PC-9 (cell line): ENCODE measurements at regions of chr9 and their contacts with region 1.

Region 1: DNA sequence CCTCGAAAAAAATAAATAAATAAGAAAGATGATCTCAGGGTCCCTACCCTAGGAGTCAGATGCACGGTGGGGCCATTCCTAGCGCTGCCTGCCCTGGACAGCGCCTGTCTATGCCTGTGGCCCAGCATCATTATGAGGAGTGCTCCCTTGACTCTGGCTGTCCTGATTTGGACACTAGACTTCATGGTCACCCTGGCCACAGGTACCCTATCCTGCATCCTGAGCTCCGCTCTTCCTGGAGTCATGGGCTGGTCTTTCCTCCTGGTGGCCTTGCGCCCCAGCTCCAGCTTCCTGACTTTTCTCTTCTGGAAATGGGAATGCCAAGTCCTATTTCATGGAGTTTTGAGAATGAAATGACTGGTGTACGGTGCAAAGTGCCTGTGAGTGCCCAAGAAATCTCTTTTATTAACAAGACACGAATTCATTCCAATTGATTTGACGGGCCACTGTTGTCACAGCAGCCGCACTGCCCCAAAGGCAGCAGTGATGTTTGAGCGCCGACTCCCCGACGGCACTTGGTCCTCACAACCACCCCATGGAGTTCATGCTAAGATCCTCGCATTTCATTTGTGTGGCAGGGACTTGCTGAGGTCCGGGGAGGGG is 564 bp upstream of the AIF1L start:
- DNase-seq: no peak
- H3K4me3 ChIP-seq: peak overlapping the region; percentile 92; the same call in 1 of the 2 replicates
- H3K27ac ChIP-seq: no peak overlapping the region
- H3K4me1 ChIP-seq: peaks cover 28% of the 10 kb centered on the region
- H3K27me3 ChIP-seq: no peaks in the 10 kb centered on the region
- CTCF ChIP-seq: no peak

Region 2: DNA sequence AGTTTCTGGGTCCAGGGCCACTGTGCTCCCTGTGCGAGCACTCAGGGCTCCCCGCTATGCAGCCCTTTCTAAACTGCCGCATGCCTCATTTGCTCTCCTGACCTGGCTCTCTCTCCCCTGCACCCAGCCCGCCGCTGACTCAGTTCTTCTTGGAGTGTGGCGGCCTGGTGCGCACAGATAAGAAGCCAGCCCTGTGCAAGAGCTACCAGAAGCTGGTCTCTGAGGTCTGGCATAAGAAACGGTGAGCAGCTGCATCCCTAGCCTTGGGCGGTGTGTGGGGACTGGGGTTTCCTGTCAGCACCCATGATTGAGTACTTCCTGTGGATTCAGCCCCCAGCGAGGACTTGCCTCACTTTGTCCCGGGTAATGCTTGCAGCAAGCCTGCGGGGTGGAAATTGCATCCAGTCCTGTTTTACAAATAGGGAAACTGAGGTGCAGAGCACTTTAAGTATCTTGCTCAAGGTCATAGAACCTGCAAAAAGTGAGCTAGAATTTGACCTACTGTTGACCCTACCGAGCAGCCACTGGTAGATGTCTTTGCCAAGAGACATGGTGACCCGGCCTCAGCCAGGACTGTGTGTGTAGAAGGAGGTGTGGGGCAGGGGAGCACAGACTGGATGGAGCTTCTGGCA is 1232.6 kb before region 1 on chr9:
- CTCF ChIA-PET with region 1: no interaction called
- POLR2A ChIA-PET with region 1: interaction called, 21 read pairs
- intact Hi-C with region 1: no loop called
- DNase-seq: peak; percentile 46 to 67
- H3K4me3 ChIP-seq: no peak overlapping the region
- H3K27ac ChIP-seq: no peak overlapping the region
- H3K4me1 ChIP-seq: no peaks in the 10 kb centered on the region
- H3K27me3 ChIP-seq: no peaks in the 10 kb centered on the region
- CTCF ChIP-seq: no peak

Region 3: DNA sequence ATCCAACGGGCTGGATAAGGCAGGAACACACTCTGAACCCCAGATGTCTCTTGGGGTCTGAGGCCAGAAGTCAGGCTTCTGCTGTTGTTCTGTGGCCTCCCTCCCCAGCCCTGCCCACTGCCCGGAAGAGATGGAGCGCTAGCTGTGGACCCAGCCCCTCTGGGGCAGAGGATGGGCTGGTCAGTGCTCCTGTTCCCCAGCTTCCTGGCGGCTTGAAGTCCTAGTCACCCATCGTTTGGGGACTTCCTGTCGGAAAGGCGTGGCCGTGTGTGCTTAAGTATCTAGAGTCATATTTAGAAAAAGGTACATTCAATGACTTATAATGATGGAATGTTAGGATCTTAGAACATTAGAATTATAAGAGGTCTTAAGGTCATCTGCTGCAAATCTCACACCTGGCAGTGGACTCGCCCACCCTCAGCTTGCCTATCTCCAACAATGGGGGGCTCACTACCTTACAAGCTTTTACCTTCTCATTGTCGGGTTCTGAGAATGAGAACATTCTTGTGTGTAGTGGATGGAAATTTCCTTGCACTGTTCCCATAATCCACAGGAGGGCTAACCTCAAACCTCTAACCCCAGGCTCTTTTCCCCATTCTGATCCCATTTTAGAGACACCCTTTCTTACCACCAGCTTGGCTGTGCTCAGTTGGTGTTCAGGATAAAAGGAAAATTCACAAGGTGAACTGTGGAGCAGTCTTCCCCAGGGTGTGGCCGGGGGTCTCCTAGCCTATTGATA is 12.8 kb before region 1 on chr9:
- CTCF ChIA-PET with region 1: no interaction called
- POLR2A ChIA-PET with region 1: interaction called, 18 read pairs
- intact Hi-C with region 1: loop called (anchors 1 kb)
- DNase-seq: peak; percentile 55 to 93
- H3K4me3 ChIP-seq: no peak overlapping the region
- H3K27ac ChIP-seq: peak overlapping the region; percentile 28
- H3K4me1 ChIP-seq: peaks cover 38% of the 10 kb centered on the region
- H3K27me3 ChIP-seq: no peaks in the 10 kb centered on the region
- CTCF ChIP-seq: no peak; the same call in 1 of the 2 replicates

Region 4: DNA sequence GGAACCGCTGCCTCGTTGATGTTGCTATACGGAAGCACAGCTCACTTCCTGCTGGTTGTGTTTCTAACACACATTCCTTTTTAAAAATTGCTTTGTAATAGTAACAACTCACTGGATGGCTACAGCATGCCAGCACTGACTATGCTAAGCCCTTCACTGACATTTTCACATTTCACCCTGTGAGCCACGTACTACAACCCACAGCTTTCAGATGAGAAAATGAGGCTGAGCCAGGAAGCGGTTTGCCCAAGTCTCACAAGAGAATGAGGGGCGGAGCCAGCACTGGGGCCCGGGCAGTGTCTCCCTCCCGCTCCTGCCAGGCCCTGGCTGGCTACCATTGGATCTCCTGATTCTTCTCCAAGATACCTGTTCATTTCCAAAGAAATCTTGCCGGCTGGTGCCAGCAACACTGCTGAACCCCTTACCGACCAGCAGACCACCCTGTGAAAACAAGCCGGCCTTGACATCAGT is 142.2 kb after region 1 on chr9:
- CTCF ChIA-PET with region 1: no interaction called
- POLR2A ChIA-PET with region 1: no interaction called
- intact Hi-C with region 1: no loop called
- DNase-seq: peak; percentile 26 to 53
- H3K4me3 ChIP-seq: no peak overlapping the region
- H3K27ac ChIP-seq: no peak overlapping the region
- H3K4me1 ChIP-seq: no peaks in the 10 kb centered on the region
- H3K27me3 ChIP-seq: no peaks in the 10 kb centered on the region
- CTCF ChIP-seq: no peak